Activated naive CD4-positive, alpha-beta T cell treated with anti-CD3 and anti-CD28 coated beads for 36 hours (primary cell): ENCODE measurements at regions of chr1 and their contacts with region 1.

Region 1: GRCh38 chr1:109548321-109549267 is at the start of gene GNAI3:
- DNase-seq: peak; percentile 98
- H3K4me3 Mint-ChIP-seq: peak within 1 kb of the TSS; percentile 91
- H3K27ac Mint-ChIP-seq: peak within 1 kb of the TSS; percentile 88
- H3K4me1 Mint-ChIP-seq: peaks cover 41% of the 10 kb centered on the region
- H3K27me3 Mint-ChIP-seq: no peaks in the 10 kb centered on the region
- total RNA-seq, gene GNAI3: 8.0 to 8.5 TPM

Region 2: DNA sequence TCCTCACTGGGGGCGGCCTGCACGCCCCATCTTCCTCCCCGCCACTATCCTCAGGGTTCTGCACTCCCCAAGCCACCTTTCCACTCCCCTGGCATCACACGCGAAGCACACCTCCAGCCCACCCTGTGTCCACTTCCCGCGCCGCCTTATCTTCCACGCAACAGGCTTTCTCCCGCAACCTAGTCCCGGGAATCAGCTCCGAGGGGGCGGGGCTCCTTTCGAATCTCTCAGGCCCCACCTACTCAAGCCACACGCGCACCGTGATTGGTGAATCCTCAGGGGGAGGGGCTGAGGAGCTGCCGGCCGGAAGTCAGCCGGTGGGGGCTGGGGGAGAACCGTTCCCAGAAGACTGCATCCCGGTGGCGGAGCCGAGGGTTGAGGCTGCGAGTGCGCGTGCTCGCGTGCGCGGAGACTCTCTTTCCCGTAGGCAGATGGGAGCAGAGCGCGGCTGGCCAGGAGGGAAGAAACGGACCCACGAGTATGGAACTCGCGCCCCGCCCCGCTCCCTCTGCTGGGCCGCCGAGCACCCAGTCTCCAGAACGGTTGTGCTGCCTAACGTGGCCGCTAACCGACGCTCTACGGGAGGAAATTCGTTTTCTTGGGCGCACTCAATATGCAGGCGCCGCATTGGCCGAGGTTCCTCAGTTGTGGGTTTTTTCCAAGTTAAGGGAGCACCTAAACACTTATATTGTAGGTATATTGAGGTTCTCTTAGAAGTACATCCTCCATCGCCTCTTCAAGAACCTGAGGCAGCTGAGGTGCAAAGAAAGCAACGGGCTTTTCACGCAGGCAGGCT is 265.4 kb before region 1 on chr1 and contains the start of gene PSRC1:
- CTCF ChIA-PET with region 1: no interaction called
- intact Hi-C with region 1: loop called (anchors 1 kb)
- DNase-seq: peak; percentile 94
- H3K4me3 Mint-ChIP-seq: peak within 1 kb of the TSS; percentile 94
- H3K27ac Mint-ChIP-seq: peak within 1 kb of the TSS; percentile 89
- H3K4me1 Mint-ChIP-seq: peaks cover 6% of the 10 kb centered on the region
- H3K27me3 Mint-ChIP-seq: no peaks in the 10 kb centered on the region
- total RNA-seq, gene PSRC1: 19.3 to 21.5 TPM

Region 3: GRCh38 chr1:109493805-109494539 is 54.6 kb before region 1 on chr1 and contains the start of gene CYB561D1:
- CTCF ChIA-PET with region 1: interaction called, 10 read pairs
- intact Hi-C with region 1: no loop called
- DNase-seq: peak; percentile 90
- H3K4me3 Mint-ChIP-seq: peak within 1 kb of the TSS; percentile 98
- H3K27ac Mint-ChIP-seq: peak within 1 kb of the TSS; percentile 92
- H3K4me1 Mint-ChIP-seq: peaks cover 54% of the 10 kb centered on the region
- H3K27me3 Mint-ChIP-seq: no peaks in the 10 kb centered on the region
- total RNA-seq, gene CYB561D1: 6.6 to 8.5 TPM

Region 4: GRCh38 chr1:109620841-109621286 is 72.3 kb after region 1 on chr1:
- CTCF ChIA-PET with region 1: interaction called, 15 read pairs
- intact Hi-C with region 1: loop called (anchors 1 kb)
- DNase-seq: peak; percentile 98
- H3K4me3 Mint-ChIP-seq: peak overlapping the region; percentile 93
- H3K27ac Mint-ChIP-seq: peak overlapping the region; percentile 91
- H3K4me1 Mint-ChIP-seq: peaks cover 57% of the 10 kb centered on the region
- H3K27me3 Mint-ChIP-seq: no peaks in the 10 kb centered on the region

Region 5: DNA sequence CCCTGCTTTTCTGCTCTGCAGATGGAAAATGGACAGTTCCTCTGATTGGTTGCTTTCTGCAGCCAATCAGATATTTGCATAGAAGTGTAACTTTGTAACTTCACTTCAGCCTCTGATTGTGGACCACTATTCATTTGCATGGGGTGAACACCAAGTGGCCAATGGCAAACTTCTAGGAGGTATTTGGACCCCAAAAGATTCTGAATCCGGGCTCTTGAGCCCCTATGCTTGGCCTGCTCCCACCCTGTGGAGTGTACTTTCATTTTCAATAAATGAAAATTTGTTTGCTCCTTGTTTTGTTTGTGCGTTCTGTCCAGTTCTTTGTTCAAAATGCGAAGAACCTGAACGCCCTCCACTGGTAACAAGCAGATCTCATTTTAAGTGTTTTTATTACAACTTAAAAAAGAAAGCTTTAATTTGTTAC is 100.9 kb after region 1 on chr1:
- CTCF ChIA-PET with region 1: interaction called, 115 read pairs
- intact Hi-C with region 1: no loop called
- DNase-seq: no peak
- H3K4me3 Mint-ChIP-seq: no peak overlapping the region
- H3K27ac Mint-ChIP-seq: no peak overlapping the region
- H3K4me1 Mint-ChIP-seq: no peaks in the 10 kb centered on the region
- H3K27me3 Mint-ChIP-seq: peaks cover 6% of the 10 kb centered on the region

Region 6: DNA sequence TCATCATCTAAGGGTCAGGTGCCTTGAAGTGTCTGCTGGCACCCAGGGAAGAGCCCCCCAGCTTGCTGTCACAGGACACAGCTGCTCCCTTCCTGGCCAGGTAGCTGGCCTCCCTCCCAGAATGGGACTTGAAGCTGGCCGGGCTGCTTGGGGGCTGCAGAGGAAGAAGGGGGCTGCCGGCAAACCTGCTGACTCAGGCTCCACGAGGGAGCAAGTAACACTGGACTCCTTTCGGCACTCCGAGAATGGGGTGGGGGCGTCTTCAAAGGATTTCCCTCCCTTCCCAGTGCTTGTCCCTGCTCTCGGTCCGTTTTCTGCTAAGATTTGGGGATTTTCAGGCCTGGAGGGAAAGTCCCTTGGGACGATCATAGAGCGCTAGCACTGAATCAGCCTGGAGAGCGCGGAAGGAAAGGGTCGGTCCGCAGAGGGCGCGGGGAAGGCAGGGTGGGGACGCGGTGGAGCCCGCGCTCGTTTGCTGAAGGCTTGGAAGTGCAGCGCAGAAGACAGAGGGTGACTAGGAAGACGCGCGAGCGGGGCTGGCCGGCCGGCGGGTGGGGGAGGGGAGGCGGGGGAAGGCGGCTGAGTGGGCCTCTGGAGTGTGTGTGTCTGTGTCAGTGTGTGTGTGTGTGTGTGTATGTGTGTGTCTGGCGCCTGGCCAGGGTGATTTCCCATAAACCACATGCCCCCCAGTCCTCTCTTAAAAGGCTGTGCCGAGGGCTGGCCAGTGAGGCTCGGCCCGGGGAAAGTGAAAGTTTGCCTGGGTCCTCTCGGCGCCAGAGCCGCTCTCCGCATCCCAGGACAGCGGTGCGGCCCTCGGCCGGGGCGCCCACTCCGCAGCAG is 361.7 kb after region 1 on chr1 and contains the start of gene CSF1:
- CTCF ChIA-PET with region 1: no interaction called
- intact Hi-C with region 1: loop called (anchors 2 kb)
- DNase-seq: peak; percentile 69
- H3K4me3 Mint-ChIP-seq: peak within 1 kb of the TSS; percentile 82
- H3K27ac Mint-ChIP-seq: peak within 1 kb of the TSS; percentile 81
- H3K4me1 Mint-ChIP-seq: peaks cover 53% of the 10 kb centered on the region
- H3K27me3 Mint-ChIP-seq: no peaks in the 10 kb centered on the region
- total RNA-seq, gene CSF1: 12.0 to 13.5 TPM

Region 7: DNA sequence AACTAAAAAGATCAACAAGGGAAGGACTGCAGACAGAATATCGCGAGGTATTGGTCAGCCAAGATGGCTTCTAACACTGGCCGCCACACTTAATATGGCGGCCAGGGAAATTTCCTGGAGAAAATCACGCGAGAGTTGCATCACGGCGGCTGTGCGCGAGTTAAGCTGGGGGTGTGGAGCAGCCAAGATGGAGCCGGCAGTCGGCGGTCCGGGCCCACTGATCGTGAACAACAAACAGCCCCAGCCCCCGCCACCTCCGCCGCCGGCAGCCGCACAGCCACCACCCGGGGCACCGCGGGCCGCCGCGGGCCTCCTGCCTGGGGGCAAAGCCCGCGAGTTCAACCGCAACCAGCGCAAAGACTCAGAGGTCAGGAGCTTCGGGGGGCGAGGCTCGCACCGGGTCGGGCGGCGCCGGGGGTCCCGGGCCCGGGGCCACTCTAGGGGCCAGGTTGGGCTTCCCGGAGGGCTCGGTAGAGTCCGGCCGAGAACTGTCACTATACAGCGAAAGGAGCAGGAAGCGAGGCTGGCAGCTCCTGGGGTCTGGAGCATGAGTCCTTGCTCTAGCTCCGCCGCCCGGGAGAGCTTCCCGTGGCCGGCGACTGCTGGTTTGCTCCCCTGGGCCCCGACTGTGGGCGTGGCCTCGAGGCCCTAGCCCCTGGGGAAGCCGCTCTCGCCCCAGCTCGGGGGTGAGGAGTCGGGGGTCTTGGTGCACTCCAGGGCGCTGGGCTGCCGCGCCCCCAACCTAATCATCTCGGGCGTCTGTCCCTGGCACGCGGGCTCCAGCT is 486.0 kb after region 1 on chr1 and contains the start of gene STRIP1:
- CTCF ChIA-PET with region 1: interaction called, 5 read pairs
- intact Hi-C with region 1: loop called (anchors 1 kb)
- DNase-seq: peak; percentile 96
- H3K4me3 Mint-ChIP-seq: peak within 1 kb of the TSS; percentile 91
- H3K27ac Mint-ChIP-seq: peak within 1 kb of the TSS; percentile 79
- H3K4me1 Mint-ChIP-seq: peaks cover 51% of the 10 kb centered on the region
- H3K27me3 Mint-ChIP-seq: no peaks in the 10 kb centered on the region
- total RNA-seq, gene STRIP1: 20.7 to 22.8 TPM